ENCODE measurements at regions of chr2 and their contacts with region 1.

Region 1: DNA sequence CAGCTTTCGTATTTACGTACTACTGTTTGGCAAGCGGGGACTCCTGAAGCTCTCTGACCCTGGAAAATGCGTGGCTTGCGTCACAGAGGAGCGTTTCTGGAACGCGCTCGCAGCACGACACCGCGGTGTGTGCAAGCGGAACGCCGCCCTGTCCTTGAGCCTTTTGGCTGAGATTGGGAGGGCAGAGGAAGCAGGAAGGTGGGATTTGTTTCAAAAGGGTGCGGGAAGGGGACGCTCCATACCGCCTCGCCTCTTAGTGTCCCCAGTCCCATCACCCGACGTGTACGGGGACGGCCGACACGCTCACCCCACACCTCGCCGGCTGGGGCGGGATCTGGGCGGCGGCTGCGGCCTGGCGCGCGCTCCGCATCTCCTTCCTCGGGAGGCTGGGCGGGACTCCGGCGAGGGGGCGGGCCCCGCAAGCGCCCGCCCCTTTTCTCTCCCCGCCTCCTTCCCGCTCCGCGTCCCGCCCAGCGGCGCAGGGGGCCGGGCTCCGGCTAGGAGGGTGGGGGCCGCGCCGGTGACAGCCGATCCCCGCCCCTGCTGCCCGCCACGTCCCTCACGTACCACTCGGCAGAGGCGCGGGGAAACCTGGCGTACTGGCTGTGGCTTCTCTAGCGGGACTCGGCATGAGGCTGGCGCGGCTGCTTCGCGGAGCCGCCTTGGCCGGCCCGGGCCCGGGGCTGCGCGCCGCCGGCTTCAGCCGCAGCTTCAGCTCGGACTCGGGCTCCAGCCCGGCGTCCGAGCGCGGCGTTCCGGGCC is at the start of gene PDK1:
- DNase-seq: peak; percentile 91
- H3K4me3 Mint-ChIP-seq: peak within 1 kb of the TSS; percentile 97
- H3K27ac Mint-ChIP-seq: peak within 1 kb of the TSS; percentile 98
- H3K4me1 Mint-ChIP-seq: peaks cover 65% of the 10 kb centered on the region
- H3K27me3 Mint-ChIP-seq: no peaks in the 10 kb centered on the region
- total RNA-seq, gene PDK1: 27.6 and 35.8 TPM in 2 replicates

Region 2: DNA sequence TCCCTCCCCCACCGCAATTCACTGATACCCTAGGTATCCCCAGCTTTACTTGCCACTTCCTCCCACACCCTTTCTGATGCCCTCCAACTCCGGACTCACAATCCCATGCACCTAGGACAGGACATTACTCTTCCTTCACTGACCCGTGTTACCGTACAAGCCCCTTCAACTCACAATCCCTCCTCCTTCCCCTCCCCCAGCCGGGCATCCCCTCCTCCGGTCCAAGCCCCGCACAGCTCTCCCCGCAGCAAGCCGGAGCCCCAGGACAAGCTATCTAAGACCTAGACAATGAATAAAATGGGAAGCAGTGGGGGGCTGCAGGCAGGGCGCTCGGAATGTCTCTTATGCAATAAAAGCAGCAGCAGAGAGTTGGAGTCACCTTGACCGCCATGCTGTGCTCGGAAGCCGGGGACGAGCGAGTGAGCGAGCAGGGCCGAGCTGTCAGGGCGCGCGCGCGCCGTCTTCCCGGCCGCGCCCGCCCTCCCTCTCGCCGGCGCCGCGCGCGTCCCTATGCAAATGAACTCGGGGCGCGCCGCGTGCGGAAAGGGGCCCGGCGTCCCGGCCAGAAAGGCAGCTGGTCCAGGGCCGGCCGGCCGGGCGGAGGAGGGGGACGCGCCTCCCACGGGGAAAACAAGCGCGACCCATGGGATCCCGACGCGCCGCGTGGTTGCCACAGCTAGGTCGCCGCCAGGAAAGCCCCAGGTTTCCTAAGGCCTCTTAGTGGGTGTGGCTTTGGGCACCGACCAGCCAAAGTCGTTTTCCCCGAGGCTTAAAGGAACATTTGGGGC is 661.7 kb before region 1 on chr2 and contains the start of gene SLC25A12:
- intact Hi-C with region 1: loop called (anchors 10 kb)
- DNase-seq: peak; percentile 71
- H3K4me3 Mint-ChIP-seq: peak within 1 kb of the TSS; percentile 98
- H3K27ac Mint-ChIP-seq: peak within 1 kb of the TSS; percentile 90
- H3K4me1 Mint-ChIP-seq: peaks cover 57% of the 10 kb centered on the region
- H3K27me3 Mint-ChIP-seq: peaks cover 7% of the 10 kb centered on the region
- total RNA-seq, gene SLC25A12: 34.6 and 35.0 TPM in 2 replicates

Region 3: GRCh38 chr2:171999604-172000469 is 555.9 kb before region 1 on chr2 and contains the start of gene METAP1D:
- intact Hi-C with region 1: loop called (anchors 1 kb)
- DNase-seq: peak; percentile 88
- H3K4me3 Mint-ChIP-seq: peak within 1 kb of the TSS; percentile 98
- H3K27ac Mint-ChIP-seq: peak within 1 kb of the TSS; percentile 96
- H3K4me1 Mint-ChIP-seq: peaks cover 19% of the 10 kb centered on the region
- H3K27me3 Mint-ChIP-seq: peaks cover 5% of the 10 kb centered on the region
- total RNA-seq, gene METAP1D: 5.4 and 6.4 TPM in 2 replicates

Region 4: DNA sequence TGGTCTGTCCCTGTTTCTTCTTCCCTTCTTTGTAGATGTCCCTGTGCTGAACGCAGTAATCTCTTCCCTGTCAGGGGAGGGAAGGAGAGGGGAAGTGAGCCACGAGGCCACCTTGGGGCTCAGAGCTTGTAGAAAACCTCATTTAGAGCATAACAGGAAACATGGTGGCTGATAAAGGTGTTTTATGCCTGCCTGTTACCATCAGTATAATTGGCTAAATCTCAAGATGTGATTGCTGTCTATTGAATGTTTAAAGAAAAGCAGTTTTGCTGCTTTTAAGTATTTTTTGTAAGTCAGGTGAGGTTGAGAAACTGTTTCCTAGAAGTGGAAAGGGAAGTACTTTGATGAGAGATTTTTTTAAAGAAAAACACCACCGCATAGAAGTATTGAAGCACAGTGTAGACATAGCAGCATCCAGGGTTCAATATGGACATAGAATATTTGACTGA is 59.5 kb before region 1 on chr2:
- intact Hi-C with region 1: loop called (anchors 5 kb)
- DNase-seq: peak; percentile 6
- H3K4me3 Mint-ChIP-seq: no peak overlapping the region
- H3K27ac Mint-ChIP-seq: peak overlapping the region; percentile 79
- H3K4me1 Mint-ChIP-seq: peaks cover 26% of the 10 kb centered on the region
- H3K27me3 Mint-ChIP-seq: no peaks in the 10 kb centered on the region

Region 5: GRCh38 chr2:172525606-172526005 is 30.1 kb before region 1 on chr2:
- intact Hi-C with region 1: no loop called
- DNase-seq: no peak
- H3K4me3 Mint-ChIP-seq: no peak overlapping the region
- H3K27ac Mint-ChIP-seq: no peak overlapping the region
- H3K4me1 Mint-ChIP-seq: no peaks in the 10 kb centered on the region
- H3K27me3 Mint-ChIP-seq: no peaks in the 10 kb centered on the region

Region 6: DNA sequence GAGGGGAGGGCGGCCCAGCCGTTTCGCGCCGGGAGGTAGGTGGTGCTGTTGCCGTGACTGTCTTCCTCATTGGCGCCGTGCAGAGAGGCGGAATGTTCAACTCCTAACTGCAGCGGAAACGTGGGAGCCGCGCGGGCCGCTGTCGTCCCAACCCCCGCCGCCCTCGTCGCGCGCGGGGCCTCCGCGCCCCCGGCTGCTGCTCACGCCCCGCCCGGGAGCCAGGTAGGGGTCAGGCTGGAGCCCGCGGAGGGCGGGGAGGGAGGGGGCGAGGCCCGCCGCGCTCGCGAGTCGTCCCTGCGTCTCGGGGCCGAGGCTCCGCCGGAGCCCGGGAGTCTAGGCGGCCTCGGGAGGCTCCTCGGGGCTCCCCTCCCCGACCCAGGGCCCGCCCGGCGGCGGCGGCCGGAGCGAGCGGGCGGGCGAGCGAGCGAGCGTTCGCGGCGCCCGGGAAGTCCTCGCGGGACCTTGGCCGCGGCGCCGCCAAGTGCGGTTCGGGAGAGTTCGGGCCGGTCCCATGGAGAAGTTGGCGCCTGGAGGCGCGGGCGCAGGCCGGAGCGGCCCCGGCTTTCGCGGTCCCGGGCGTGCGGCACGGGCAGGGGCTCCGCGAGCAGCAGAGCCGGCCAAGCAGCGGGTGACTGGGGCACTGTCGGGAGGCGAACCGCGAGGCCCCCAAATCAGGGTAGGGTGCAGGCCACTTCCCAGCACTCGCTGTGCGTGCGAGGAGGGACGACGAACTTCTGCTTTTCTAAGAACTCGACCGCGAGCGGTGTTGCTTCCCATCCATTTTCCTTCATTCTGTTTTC is 520.3 kb after region 1 on chr2 and contains the start of gene MAP3K20:
- intact Hi-C with region 1: loop called (anchors 10 kb)
- DNase-seq: peak; percentile 60
- H3K4me3 Mint-ChIP-seq: peak within 1 kb of the TSS; percentile 86
- H3K27ac Mint-ChIP-seq: peak within 1 kb of the TSS; percentile 77
- H3K4me1 Mint-ChIP-seq: peaks cover 29% of the 10 kb centered on the region
- H3K27me3 Mint-ChIP-seq: peaks cover 19% of the 10 kb centered on the region
- total RNA-seq, gene MAP3K20: 17.7 and 21.8 TPM in 2 replicates